ENCODE measurements at regions of chr3 and their contacts with region 1.

Region 1: DNA sequence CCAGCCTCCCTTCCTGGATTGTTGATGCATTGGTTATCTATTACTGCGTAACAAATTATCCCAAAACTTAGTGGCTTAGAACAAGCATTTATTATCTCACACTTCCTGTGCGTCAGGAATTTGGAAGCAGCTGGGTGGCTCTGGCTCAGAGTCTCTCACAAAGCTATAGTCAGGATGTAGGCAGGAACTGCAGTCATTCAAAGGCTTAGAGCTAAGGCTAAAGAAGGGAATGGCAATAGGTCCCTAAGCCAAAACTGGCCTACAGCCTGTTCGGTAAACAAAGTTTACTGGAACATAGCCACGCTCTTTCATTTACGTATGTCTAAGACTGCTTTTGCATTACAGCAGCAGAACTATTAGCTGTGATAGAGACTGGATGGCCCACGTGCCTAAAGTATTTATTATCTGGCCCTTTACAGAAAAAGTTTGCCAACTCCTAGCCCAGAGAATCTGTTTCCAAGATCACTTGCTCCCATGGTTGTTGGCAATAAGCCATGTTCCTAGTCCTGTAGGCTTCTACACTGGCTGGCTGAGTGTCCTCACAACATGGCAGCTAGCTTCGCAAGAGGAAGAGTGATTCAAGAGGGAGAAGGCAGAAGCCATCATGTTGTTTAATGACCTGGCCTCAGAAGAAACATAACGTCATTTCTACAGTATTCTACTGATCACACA is 132.4 kb downstream of the SNRK start:
- DNase-seq: peak; percentile 88
- H3K4me3 ChIP-seq: no peak overlapping the region
- H3K27ac ChIP-seq: peak overlapping the region; percentile 77
- H3K4me1 ChIP-seq: peaks cover 26% of the 10 kb centered on the region
- H3K27me3 ChIP-seq: no peaks in the 10 kb centered on the region
- CTCF ChIP-seq: no peak
- POLR2A ChIP-seq: no peak

Region 2: GRCh38 chr3:43043071-43043766 is 375.5 kb before region 1 on chr3:
- CTCF ChIA-PET with region 1: no interaction called
- POLR2A ChIA-PET with region 1: no interaction called
- dilution Hi-C with region 1: no loop called
- intact Hi-C with region 1: no loop called
- DNase-seq: no peak
- H3K4me3 ChIP-seq: no peak overlapping the region
- H3K27ac ChIP-seq: no peak overlapping the region
- H3K4me1 ChIP-seq: no peaks in the 10 kb centered on the region
- H3K27me3 ChIP-seq: no peaks in the 10 kb centered on the region
- CTCF ChIP-seq: no peak
- POLR2A ChIP-seq: no peak

Region 3: GRCh38 chr3:43497905-43498365 is 79.2 kb after region 1 on chr3:
- CTCF ChIA-PET with region 1: interaction called, 10 read pairs
- POLR2A ChIA-PET with region 1: no interaction called
- dilution Hi-C with region 1: no loop called
- intact Hi-C with region 1: loop called (anchors 2 kb)
- DNase-seq: peak; percentile 51
- H3K4me3 ChIP-seq: no peak overlapping the region
- H3K27ac ChIP-seq: peak overlapping the region; percentile 91
- H3K4me1 ChIP-seq: peaks cover 56% of the 10 kb centered on the region
- H3K27me3 ChIP-seq: no peaks in the 10 kb centered on the region
- CTCF ChIP-seq: no peak
- POLR2A ChIP-seq: no peak